ENCODE measurements at regions of chr16 and their contacts with region 1.

Region 1: DNA sequence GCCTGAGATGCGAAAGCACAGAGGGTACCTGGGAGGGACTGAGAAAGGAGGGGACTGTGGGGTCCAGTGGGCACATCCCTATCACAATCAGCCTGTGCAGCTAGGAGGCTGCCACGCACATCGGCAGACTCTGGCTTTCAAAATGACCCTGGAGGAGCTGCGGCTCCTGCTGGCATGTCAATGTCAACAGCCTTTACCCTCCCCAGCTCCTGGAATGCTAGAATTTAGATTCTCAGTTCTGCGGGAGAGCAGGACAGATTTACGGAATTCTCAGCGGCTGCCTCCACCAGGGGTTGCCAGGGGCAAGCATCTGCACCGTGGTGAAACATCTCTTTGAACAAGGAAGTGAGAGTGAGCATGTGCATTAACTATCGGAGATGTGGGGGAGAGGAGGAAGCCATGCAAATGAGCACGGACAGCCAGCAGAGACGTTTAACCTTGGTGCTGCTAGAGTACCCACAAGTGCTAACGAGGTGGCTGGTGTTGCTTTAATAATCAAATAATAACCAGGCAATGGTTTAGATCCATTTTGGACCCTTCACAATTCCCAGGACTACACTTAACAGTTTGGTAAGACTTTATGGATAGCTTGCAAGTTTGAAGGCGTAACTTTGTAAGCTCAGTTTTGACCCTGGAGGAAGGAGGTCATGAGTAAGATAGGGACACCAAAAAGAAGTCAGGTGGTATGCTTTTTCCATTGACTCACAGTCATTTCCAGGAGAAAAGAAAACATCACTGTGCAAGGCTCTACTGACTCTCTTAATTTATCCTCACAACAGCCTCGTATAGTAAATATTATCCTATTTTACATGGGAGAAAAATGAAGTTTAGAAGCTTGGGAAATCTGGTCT is 54.1 kb downstream of the XYLT1 start:
- DNase-seq: peak; percentile 68 to 88 (median 80)
- H3K4me3 ChIP-seq: peak overlapping the region in 5 of 7 experiments; percentile 32 to 65 (median 44)
- H3K27ac ChIP-seq: peak overlapping the region in 1 of 2 experiments; percentile 56
- H3K4me1 ChIP-seq: peaks cover 7 to 49% (median 36%) of the 10 kb centered on the region in 4 experiments
- H3K27me3 ChIP-seq: no peaks in the 10 kb centered on the region

Region 2: DNA sequence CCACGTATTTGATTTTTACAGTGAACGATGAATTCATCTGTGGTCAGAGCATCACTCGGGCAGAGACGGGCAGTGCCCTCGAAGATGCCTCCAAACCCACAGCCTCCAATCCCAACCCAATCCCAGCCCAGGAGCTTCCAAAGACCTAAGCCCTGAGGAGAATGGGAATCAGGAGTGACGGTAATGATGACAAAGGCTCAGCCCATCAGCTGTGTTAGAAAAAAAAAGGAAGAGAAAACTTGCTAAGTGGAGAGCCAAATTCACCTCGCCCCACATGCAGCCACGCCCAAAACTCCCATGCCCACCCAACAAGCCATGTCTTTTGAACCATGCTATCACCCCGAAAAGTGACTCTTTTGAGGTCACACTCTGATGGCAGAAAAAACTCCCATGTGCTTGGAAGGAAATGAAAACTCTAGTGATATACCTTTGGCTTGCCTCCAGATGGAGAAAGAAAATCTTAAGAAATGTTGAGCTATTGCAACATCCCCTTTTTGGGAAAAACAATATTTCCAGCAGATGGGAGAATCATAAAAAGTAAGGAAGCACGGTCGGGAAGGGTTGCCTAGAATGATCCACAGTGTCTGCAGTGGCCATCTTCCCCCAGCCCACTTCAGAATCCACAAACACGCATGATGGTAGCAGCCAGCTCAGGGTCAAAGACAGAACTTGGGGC is 16.4 kb after region 1 on chr16:
- CTCF ChIA-PET with region 1: interaction called, 12 read pairs
- POLR2A ChIA-PET with region 1: interaction called, 3 read pairs
- DNase-seq: no peak
- H3K4me3 ChIP-seq: no peak overlapping the region
- H3K27ac ChIP-seq: no peak overlapping the region
- H3K4me1 ChIP-seq: peaks cover 2 to 7% (median 5%) of the 10 kb centered on the region in 4 experiments
- H3K27me3 ChIP-seq: no peaks in the 10 kb centered on the region

Measured in common myeloid progenitor, CD34-positive (primary cell).